ENCODE measurements at regions of chr1 and their contacts with region 1.

Region 1: DNA sequence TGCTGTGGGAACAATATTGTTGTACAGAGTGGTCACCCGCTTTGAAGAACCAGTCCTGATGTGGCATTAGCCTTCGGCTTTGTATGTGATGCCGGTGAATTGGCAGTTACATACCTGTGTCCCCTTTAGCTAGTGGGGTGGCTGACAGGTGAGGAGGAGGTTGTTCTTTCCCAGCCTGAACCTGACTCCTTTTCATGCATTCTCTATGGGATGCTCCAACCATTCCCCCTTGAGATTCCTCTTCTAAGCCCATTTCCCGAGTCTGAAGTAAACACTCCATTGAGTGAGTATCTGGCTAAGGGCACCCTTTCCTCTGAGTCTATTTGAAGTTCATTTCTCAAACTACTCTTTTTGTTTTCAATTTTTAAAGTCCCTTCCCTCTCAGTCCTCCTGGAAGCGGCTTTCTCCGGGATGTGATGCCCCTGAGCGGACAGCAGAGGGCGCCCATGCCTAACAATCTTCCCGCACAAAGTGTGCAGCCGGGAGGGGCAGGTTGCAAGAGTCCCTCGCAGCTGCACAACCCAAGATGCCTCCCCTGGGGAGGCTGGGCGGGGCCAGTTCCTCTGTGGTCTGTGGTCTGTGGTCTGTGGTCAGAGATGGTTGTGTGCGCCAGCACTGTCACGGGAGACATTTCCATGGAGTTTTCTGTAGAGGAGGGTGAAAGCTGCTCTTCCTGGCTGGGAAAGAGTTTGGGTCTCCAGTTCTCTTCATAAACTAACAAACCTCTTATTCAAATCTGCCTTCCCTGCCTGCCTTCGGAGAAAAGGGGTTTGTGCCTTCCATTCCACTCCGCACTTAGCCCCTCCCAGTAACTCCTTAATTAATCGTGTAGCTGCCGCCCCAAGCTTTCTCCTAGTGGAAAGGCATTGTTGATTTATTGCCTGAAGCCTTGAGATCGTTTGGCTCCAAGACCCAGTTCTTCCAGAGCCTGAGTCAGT is 36.4 kb upstream of the LMX1A start:
- DNase-seq: peak; percentile 73
- H3K4me3 ChIP-seq: no peak overlapping the region
- H3K27ac ChIP-seq: no peak overlapping the region
- H3K4me1 ChIP-seq: no peaks in the 10 kb centered on the region
- H3K27me3 ChIP-seq: peaks cover 70% of the 10 kb centered on the region
- CTCF ChIP-seq: peak; percentile 86 to 92 (median 91)

Region 2: GRCh38 chr1:165129568-165130164 is 263.2 kb before region 1 on chr1:
- dilution Hi-C with region 1: no loop called
- DNase-seq: peak; percentile 32
- H3K4me3 ChIP-seq: no peak overlapping the region
- H3K27ac ChIP-seq: no peak overlapping the region
- H3K4me1 ChIP-seq: no peaks in the 10 kb centered on the region
- H3K27me3 ChIP-seq: peaks cover 3% of the 10 kb centered on the region
- CTCF ChIP-seq: peak; percentile 78 to 86 (median 84)

Region 3: GRCh38 chr1:165284454-165284853 is 108.4 kb before region 1 on chr1:
- dilution Hi-C with region 1: no loop called
- DNase-seq: no peak
- H3K4me3 ChIP-seq: no peak overlapping the region
- H3K27ac ChIP-seq: no peak overlapping the region
- H3K4me1 ChIP-seq: no peaks in the 10 kb centered on the region
- H3K27me3 ChIP-seq: peaks cover 32% of the 10 kb centered on the region
- CTCF ChIP-seq: no peak

Region 4: DNA sequence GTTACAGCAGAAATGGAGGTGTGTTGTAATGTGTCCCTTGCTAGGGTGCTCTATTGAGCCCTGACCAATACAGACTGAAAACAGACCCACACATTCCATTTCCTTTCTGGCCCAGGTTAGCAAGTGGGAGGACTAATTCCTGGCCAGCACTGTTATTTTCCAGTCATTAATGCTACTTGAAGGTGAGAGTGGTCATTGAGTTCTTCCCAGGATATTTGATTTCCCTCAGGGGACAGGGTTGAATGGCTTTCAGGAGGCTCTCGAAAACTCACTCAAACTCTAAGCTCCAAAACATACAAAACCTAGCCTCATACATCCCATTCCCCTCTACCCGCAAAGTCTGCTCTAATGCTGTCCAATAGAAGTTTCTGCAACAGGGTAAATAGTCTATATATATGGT is 157.1 kb after region 1 on chr1:
- dilution Hi-C with region 1: no loop called
- DNase-seq: no peak
- H3K4me3 ChIP-seq: no peak overlapping the region
- H3K27ac ChIP-seq: no peak overlapping the region
- H3K4me1 ChIP-seq: no peaks in the 10 kb centered on the region
- H3K27me3 ChIP-seq: peaks cover 6% of the 10 kb centered on the region
- CTCF ChIP-seq: no peak

Region 5: DNA sequence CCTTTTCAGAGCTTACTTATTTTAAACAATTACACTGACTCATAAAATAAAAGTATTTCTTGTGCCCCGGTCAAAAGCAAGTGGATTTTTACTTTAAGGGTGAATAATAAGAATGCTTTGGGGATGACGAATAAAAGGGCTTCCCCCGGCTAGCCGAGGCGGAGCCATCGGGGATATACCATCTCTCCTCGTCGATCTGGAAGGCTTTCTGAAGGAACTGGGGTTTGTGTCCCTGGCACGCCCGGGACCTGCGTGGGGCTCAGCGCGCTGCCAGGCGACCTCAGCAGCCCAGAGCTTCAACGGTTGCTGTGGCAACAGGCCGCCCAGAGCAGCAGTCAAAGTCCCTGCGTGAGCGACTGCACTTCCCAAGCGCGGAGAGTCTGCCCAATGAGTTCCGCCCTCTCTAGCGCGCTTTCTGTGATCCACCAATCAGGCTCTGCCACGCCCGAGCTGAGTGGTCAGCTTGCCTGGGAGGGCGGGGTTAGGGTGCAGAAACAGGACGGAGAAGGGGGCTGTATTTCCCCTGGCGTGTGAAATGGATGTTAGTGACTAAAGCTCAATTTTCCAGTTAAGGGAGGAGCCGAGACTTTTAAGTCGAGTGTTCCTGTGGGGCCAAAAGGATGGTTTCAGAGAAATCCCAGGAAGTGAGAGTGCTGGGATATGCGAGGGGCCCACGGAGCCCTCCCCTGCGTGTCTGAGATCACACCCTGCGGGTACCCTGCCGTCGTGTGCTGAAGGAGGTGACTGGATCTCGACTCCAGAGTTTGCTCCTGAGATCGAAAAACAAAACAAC is 205.2 kb after region 1 on chr1:
- dilution Hi-C with region 1: loop called (anchors 10 kb)
- DNase-seq: peak; percentile 78
- H3K4me3 ChIP-seq: peak overlapping the region; percentile 60 to 73 (median 69)
- H3K27ac ChIP-seq: peak overlapping the region; percentile 84
- H3K4me1 ChIP-seq: peaks cover 10% of the 10 kb centered on the region
- H3K27me3 ChIP-seq: peaks cover 18% of the 10 kb centered on the region
- CTCF ChIP-seq: no peak